Caco-2 (cell line): ENCODE measurements at regions of chr19 and their contacts with region 1.

Region 1: GRCh38 chr19:56105090-56105701 is 15.9 kb downstream of the ZNF787 start:
- DNase-seq: peak in 1 of 2 experiments; percentile 56
- H3K4me3 ChIP-seq: no peak overlapping the region
- H3K4me3 Mint-ChIP-seq: no peak overlapping the region
- H3K27ac Mint-ChIP-seq: peak overlapping the region; percentile 48
- H3K4me1 ChIP-seq: no peaks in the 10 kb centered on the region
- H3K4me1 Mint-ChIP-seq: peaks cover 6% of the 10 kb centered on the region
- H3K27me3 ChIP-seq: no peaks in the 10 kb centered on the region
- H3K27me3 Mint-ChIP-seq: no peaks in the 10 kb centered on the region
- CTCF ChIP-seq: peak; percentile 36 to 46

Region 2: GRCh38 chr19:56170261-56170660 is 65.1 kb after region 1 on chr19:
- CTCF ChIA-PET with region 1: interaction called, 3 read pairs
- POLR2A ChIA-PET with region 1: no interaction called
- intact Hi-C with region 1: loop called (anchors 1 kb)
- DNase-seq: no peak
- H3K4me3 ChIP-seq: no peak overlapping the region
- H3K4me3 Mint-ChIP-seq: no peak overlapping the region
- H3K27ac Mint-ChIP-seq: no peak overlapping the region
- H3K4me1 ChIP-seq: no peaks in the 10 kb centered on the region
- H3K4me1 Mint-ChIP-seq: peaks cover 1% of the 10 kb centered on the region
- H3K27me3 ChIP-seq: no peaks in the 10 kb centered on the region
- H3K27me3 Mint-ChIP-seq: peaks cover 6% of the 10 kb centered on the region
- CTCF ChIP-seq: no peak